Heart right ventricle (tissue), 16 donors: ENCODE measurements at regions of chr15 and their contacts with region 1.

Region 1: GRCh38 chr15:42474827-42475226 is 16.1 kb downstream of the ZNF106 start:
- DNase-seq: no peak
- ATAC-seq: no peak
- H3K4me3 ChIP-seq: no peak overlapping the region
- H3K27ac ChIP-seq: peak overlapping the region in 2 of 10 donors; percentile 6 to 16
- H3K4me1 ChIP-seq: peaks cover 0 to 32% (median 18%) of the 10 kb centered on the region in 9 donors
- H3K27me3 ChIP-seq: no peaks in the 10 kb centered on the region
- CTCF ChIP-seq: no peak

Region 2: GRCh38 chr15:42273102-42273899 is 201.5 kb before region 1 on chr15 and contains the starts of genes GANC and TMEM87A:
- intact Hi-C with region 1: loop called in 1 of 10 experiments (anchors 10 kb)
- DNase-seq: peak; percentile 95 to 98
- ATAC-seq: peak; percentile 98 to 99 (median 98)
- H3K4me3 ChIP-seq: peak within 1 kb of the TSS; percentile 59 to 89 (median 74)
- H3K27ac ChIP-seq: peak within 1 kb of the TSS; percentile 94 to 99 (median 96)
- H3K4me1 ChIP-seq: peaks cover 0 to 63% (median 47%) of the 10 kb centered on the region in 9 donors
- H3K27me3 ChIP-seq: no peaks in the 10 kb centered on the region
- CTCF ChIP-seq: peak in 1 of 9 donors; percentile 24
- total RNA-seq, gene GANC: 15.4 to 25.8 (median 18.9) TPM
- total RNA-seq, gene TMEM87A: 17.5 to 25.9 (median 21.3) TPM

Region 3: DNA sequence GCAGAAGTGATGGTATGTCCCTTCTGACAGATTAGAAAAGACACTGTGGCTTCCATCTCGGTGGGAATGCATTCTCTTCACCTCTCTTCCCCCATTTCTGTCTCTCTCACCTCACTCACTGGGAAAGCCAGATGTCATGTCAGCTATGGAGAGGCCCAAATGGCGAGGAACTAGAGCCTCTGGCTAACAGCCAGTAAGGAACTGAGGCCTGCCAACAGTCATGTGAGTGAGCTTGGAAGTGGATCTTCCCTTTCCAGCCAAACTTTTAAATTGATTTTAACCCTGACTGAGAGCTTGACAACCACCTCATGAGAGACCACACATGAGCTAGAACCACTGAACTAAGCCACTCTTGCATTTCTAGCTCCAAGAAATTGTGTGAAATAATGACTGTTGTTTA is 297.3 kb after region 1 on chr15:
- intact Hi-C with region 1: no loop called
- DNase-seq: peak; percentile 25 to 28
- ATAC-seq: peak in 3 of 8 donors; percentile 43 to 61 (median 46)
- H3K4me3 ChIP-seq: no peak overlapping the region
- H3K27ac ChIP-seq: no peak overlapping the region
- H3K4me1 ChIP-seq: peaks cover 0 to 15% (median 8%) of the 10 kb centered on the region in 9 donors
- H3K27me3 ChIP-seq: no peaks in the 10 kb centered on the region
- CTCF ChIP-seq: no peak